ENCODE measurements at regions of chr2 and their contacts with region 1.

Region 1: GRCh38 chr2:172465417-172466334 is 38.3 kb downstream of the ITGA6 start:
- DNase-seq: peak; percentile 74
- H3K4me3 Mint-ChIP-seq: peak overlapping the region; percentile 62
- H3K27ac Mint-ChIP-seq: peak overlapping the region; percentile 96
- H3K4me1 Mint-ChIP-seq: peaks cover 55% of the 10 kb centered on the region
- H3K27me3 Mint-ChIP-seq: no peaks in the 10 kb centered on the region
- CTCF ChIP-seq: peak; percentile 74

Region 2: DNA sequence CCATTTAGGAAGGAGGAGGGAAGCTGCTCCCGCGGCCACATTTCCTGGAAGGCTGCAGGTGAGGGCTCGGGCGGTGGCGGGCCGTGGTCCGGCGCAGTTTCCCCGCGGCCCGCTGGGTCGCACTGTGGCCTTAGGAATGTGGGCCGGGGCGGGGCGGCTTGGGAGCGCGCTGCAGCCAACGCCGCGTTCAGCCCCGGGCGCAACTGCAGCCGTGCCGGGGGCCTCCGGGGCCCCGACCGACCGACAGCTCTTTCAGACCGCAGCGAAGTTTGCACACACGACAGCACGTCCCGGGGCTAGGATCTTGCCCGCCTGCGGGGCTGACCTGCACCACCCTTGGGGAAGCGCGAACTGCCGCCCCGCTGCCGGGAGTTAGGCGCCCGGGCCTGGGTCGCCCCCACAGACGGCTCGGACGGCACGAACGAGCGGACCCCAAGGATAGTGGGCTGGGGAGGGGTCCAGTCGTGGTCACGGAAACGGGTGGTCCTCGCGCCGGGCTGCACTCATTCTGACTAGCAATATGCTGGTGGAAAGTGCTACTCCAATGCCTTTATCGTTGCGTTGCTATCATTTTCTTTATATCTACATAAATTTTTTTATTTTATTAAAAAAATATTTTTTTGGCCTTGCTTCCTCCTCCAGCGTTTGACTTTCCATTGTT is 293.0 kb before region 1 on chr2:
- CTCF ChIA-PET with region 1: interaction called, 34 read pairs
- intact Hi-C with region 1: loop called (anchors 1 kb)
- DNase-seq: peak; percentile 89
- H3K4me3 Mint-ChIP-seq: peak overlapping the region; percentile 80
- H3K27ac Mint-ChIP-seq: peak overlapping the region; percentile 39
- H3K4me1 Mint-ChIP-seq: peaks cover 31% of the 10 kb centered on the region
- H3K27me3 Mint-ChIP-seq: no peaks in the 10 kb centered on the region
- CTCF ChIP-seq: peak; percentile 73

Region 3: DNA sequence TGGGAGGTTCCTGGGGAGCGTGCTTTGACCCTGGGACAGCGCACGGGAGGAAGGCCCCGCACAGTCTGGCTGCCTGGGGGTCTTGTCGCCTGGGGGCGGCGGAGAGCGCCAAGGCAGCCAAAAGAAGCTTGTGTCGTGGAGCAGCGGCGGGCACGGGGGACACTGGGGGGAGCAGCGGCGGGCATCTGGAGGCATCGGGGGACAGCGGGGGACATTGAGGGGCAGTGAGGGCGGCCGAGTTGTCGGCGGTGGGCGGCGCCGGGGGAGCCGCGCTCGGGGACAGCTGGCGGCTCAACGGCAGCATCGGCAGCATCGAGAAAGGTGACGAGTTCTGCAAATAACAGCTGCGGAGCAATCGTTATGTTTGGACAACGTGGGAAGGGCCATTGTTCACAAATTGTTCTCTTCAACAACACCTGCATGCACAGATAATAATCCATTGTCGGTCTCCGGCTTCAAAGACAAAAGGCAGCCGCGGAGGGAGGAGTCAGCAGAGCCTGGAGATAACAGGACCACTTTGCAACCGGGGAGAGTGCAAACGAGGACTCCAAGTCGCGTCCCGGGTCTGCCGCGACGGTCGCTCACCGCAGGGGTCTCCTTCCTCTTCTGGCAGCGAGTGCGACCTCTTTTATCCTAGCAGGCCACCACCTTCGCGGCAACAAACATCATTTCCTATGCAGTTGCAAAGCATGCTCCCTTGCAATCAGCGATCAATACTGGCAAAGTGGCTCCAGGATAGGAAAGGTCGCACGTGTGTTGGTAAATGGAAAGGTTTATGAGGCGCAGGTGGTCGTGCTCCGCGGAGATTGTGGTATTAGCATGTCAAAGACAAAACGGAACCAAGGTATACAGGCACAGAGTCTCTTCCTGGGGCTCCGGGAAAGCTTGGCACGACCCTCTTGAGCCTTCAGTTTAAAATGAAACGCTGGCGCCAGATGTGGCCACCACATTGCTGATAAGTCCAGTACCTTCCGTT is 230.7 kb before region 1 on chr2:
- CTCF ChIA-PET with region 1: interaction called, 23 read pairs
- intact Hi-C with region 1: no loop called
- DNase-seq: no peak
- H3K4me3 Mint-ChIP-seq: peak overlapping the region; percentile 75
- H3K27ac Mint-ChIP-seq: no peak overlapping the region
- H3K4me1 Mint-ChIP-seq: peaks cover 42% of the 10 kb centered on the region
- H3K27me3 Mint-ChIP-seq: peaks cover 23% of the 10 kb centered on the region
- CTCF ChIP-seq: no peak

Region 4: DNA sequence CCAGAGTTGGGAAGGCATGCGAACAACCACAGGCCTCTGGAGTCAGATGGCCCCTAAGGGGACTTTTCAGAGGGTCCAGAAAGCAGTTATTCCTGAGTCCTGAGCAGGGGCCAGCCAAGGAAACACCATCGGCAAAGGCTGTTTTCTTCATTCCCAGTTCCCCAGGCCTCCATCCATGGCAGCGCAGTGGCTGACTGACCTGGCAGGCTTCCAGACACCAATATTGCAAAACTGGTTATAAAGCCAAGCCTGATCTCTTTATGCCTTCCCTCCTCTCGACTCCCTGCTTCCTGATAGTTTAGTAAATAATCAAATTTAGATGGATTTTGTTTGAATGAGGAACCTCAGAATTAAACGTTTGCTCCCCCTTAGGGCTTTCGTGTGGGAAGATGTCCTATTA is 171.7 kb before region 1 on chr2:
- CTCF ChIA-PET with region 1: interaction called, 3 read pairs
- intact Hi-C with region 1: loop called (anchors 10 kb)
- DNase-seq: peak; percentile 70
- H3K4me3 Mint-ChIP-seq: no peak overlapping the region
- H3K27ac Mint-ChIP-seq: no peak overlapping the region
- H3K4me1 Mint-ChIP-seq: peaks cover 9% of the 10 kb centered on the region
- H3K27me3 Mint-ChIP-seq: peaks cover 17% of the 10 kb centered on the region
- CTCF ChIP-seq: no peak

Region 5: DNA sequence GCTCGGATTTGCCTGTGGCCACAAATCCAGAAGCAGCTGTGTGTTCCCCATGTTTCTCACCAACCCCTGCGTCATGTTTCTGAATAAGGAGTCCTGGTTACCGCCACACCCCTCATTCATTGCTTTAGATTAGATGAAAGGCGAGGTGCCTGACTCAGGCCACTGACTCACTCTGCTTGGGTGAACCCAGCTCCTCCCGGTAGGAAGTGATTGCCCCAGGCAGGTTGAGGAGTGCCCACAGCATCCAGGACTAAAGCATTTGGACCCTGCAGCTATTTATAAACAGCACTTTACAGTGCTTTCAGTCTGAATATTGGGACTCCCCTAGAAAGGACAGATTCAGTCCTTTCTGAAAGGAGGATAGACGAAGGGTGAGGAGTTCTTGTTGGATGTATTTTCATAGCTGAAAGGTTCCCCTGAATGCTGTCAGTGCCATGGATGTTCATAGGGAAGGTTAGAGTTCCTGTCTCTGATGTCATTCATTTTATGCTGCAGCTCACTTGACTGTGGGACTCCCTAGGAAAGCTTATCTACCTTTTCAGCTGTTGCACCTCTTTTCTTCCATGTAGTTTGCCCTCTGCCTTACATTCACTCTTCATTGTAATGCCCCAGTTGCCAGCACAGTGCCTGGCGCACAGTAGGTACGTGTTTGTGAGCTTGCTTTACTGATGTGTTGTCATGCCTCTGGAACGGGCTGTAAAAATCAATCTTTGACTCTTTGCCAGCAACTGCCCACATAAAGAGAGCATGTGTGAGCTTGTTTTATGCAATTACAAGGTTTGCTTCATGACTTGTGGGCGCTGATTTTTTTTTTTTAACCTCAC is 23.4 kb before region 1 on chr2:
- CTCF ChIA-PET with region 1: interaction called, 75 read pairs
- intact Hi-C with region 1: loop called (anchors 2 kb)
- DNase-seq: peak; percentile 93
- H3K4me3 Mint-ChIP-seq: peak overlapping the region; percentile 63
- H3K27ac Mint-ChIP-seq: peak overlapping the region; percentile 96
- H3K4me1 Mint-ChIP-seq: peaks cover 29% of the 10 kb centered on the region
- H3K27me3 Mint-ChIP-seq: no peaks in the 10 kb centered on the region
- CTCF ChIP-seq: no peak

Region 6: DNA sequence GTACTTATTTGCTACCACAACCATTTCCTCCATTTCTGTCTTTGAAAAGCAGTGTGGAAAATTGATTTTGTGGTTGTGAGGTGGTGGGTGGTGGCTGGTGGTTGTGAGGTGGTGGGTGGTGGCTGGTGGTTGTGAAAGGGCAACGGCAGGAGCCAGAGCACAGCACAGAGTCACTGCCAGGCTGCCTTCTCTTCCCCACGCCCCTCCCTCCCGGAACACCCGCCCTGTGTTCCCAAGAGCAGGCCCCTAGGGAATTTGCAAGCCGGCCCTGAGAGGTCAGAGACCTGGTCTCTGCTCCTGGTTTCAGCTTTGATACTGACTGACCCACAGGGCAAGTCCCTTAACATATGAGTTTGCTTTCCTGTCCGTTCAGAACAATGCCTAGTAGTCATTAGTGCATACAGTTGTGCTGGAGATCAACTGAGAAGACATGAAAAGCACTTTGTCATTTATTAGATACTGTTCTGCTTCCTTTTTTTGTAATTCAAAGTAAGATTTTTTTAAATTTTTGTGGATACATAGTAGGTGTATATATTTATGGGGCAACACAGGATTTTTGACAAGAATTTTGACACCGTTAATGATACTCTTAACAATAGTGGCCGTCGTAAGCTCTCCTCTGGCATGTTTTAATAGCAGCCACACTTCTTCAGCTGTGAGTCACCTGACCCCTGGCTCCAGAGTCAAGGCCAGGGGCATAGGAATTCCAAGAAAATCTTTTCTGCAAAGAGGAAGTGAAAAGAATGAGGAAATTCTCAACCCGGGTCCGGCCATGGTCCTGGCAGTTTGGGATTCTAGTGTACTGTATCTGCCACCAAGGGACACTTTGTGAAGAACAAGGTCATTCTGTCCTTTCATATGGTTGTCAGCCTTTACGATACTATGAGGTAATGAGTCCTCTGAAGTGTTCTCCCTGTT is 14.9 kb after region 1 on chr2:
- CTCF ChIA-PET with region 1: no interaction called
- intact Hi-C with region 1: no loop called
- DNase-seq: no peak
- H3K4me3 Mint-ChIP-seq: no peak overlapping the region
- H3K27ac Mint-ChIP-seq: peak overlapping the region; percentile 17
- H3K4me1 Mint-ChIP-seq: peaks cover 28% of the 10 kb centered on the region
- H3K27me3 Mint-ChIP-seq: no peaks in the 10 kb centered on the region
- CTCF ChIP-seq: no peak